Prostate gland (tissue), 2 donors: ENCODE measurements at regions of chr18 and their contacts with region 1.

Region 1: DNA sequence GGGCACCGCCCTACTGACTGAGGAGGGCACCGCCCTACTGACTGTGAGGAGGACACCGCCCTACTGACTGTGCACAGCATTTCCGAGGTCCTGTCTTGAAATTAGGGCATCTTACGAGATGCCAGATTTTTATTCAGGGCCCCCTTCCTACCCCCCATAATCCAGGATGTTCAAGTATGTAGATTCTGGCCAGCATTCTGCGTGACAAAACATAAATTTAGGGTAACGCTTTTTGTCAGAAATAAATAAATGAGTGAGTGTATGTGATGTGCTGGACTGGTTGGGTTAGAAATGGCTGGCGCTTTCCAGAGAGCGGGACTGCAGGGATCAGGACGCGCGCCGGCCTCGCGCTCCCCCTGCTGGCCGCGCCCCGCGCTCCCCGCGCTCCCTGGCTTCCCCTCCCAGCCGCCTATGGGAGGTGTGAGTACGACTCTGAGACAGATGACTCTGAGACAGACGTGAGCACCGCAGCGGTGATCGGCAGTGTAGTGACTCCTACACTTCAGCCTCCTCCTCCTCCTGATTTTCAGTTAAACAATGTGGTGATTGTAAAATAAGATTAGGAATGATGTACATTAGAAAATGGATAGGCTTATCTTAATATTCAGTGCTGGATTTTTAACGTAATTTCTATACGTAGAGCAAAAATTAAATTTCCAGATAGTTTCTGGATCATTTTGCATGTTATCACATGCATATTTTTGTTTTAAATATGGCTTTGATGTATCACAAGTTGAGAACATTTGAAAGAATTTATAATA is 149.2 kb upstream of the NFATC1 start:
- DNase-seq: peak; percentile 60
- H3K4me3 ChIP-seq: no peak overlapping the region
- H3K27ac ChIP-seq: no peak overlapping the region
- H3K4me1 ChIP-seq: no peaks in the 10 kb centered on the region
- H3K27me3 ChIP-seq: no peaks in the 10 kb centered on the region
- CTCF ChIP-seq: peak; percentile 64 to 92 (median 81)
- POLR2A ChIP-seq: no peak

Region 2: DNA sequence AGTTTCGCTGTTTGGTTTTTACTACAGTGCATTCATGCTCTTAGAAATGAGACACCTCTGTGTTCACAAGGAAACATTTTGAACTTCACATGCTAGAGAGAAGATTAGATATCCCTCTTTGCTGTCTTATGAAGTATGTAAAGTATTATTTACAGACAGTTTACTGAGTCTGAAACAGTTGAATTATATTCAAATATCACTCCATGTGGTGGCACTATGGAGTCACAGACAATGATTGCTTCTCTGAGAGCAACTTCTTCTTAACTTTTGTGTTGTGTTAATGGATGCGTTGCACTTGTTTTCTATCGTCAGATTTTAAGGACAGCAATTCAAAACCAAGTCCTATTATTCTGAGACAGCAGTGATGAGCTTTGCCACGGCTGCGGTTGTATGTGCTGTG is 1173.3 kb before region 1 on chr18:
- intact Hi-C with region 1: loop called (anchors 10 kb)
- DNase-seq: no peak
- H3K4me3 ChIP-seq: no peak overlapping the region
- H3K27ac ChIP-seq: no peak overlapping the region
- H3K4me1 ChIP-seq: no peaks in the 10 kb centered on the region
- H3K27me3 ChIP-seq: no peaks in the 10 kb centered on the region
- CTCF ChIP-seq: peak in 2 of 4 experiments; percentile 22 to 35
- POLR2A ChIP-seq: no peak